ENCODE measurements at regions of chr5 and their contacts with region 1.

Region 1: DNA sequence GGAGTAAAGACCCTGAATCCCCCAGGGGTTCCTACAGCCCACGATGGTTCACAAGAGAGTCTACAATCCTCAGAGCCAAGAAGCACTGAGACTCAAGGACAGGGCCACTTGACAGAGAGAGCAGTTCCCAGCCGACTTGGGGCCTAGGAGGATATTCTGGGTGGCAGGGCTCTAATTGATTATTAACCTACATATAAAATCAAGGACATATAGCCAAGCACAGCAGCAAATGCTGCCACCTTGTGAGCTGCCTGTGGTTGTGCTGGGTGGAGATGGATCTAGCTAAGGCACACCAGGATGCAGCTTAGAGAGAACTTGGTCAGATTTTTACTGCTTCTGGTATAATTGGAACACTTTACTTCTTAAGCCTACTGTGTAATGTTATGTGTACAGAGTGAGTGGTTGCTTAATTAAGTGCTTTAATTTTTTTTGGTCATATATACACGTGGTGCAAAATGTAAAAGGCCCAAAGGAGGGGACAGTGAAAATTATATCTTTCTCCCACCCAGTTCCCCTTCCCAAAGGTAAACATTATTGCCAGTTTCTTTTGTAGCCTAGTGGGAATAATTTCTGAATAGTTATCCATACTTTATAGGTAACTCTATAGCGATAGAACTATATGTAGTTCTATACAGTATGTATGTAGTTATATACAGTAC is 78.8 kb downstream of the F2RL2 start:
- DNase-seq: peak; percentile 73
- H3K4me3 Mint-ChIP-seq: peak overlapping the region; percentile 64
- H3K27ac Mint-ChIP-seq: peak overlapping the region; percentile 96
- H3K4me1 Mint-ChIP-seq: peaks cover 91% of the 10 kb centered on the region
- H3K27me3 Mint-ChIP-seq: no peaks in the 10 kb centered on the region

Region 2: DNA sequence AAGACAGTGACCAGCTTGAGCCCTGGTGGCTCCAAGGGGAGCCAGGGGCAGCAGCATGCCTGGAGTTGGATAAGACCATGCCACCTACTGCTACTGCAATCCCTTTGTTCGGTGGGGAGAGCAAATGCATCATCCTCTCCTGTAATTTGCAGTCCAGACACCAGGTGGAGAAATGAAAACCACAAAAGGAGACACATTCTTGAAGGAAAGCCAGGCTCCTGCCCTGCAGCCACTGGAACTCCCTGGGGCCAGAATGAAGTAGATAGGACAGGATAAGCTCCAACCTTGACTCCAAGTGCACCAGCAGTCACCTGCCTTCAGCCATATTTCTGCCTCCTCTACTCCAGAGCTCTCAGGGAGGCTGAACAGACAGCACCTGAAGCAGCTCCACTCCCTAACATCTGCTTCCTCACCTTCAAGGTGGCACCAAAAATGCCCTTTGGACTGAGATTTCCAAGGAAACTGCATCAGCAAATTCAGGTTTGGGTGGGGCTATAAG is 206.4 kb before region 1 on chr5:
- CTCF ChIA-PET with region 1: interaction called, 14 read pairs
- DNase-seq: peak; percentile 62
- H3K4me3 Mint-ChIP-seq: no peak overlapping the region
- H3K27ac Mint-ChIP-seq: no peak overlapping the region
- H3K4me1 Mint-ChIP-seq: peaks cover 38% of the 10 kb centered on the region
- H3K27me3 Mint-ChIP-seq: peaks cover 3% of the 10 kb centered on the region

Region 3: GRCh38 chr5:76402886-76403765 is 141.3 kb before region 1 on chr5 and contains the start of gene IQGAP2:
- CTCF ChIA-PET with region 1: interaction called, 106 read pairs
- DNase-seq: peak; percentile 90
- H3K4me3 Mint-ChIP-seq: peak within 1 kb of the TSS; percentile 88
- H3K27ac Mint-ChIP-seq: peak within 1 kb of the TSS; percentile 100
- H3K4me1 Mint-ChIP-seq: peaks cover 59% of the 10 kb centered on the region
- H3K27me3 Mint-ChIP-seq: peaks cover 13% of the 10 kb centered on the region

Region 4: GRCh38 chr5:76425928-76426804 is 118.2 kb before region 1 on chr5:
- CTCF ChIA-PET with region 1: no interaction called
- DNase-seq: no peak
- H3K4me3 Mint-ChIP-seq: no peak overlapping the region
- H3K27ac Mint-ChIP-seq: no peak overlapping the region
- H3K4me1 Mint-ChIP-seq: peaks cover 19% of the 10 kb centered on the region
- H3K27me3 Mint-ChIP-seq: no peaks in the 10 kb centered on the region

Region 5: DNA sequence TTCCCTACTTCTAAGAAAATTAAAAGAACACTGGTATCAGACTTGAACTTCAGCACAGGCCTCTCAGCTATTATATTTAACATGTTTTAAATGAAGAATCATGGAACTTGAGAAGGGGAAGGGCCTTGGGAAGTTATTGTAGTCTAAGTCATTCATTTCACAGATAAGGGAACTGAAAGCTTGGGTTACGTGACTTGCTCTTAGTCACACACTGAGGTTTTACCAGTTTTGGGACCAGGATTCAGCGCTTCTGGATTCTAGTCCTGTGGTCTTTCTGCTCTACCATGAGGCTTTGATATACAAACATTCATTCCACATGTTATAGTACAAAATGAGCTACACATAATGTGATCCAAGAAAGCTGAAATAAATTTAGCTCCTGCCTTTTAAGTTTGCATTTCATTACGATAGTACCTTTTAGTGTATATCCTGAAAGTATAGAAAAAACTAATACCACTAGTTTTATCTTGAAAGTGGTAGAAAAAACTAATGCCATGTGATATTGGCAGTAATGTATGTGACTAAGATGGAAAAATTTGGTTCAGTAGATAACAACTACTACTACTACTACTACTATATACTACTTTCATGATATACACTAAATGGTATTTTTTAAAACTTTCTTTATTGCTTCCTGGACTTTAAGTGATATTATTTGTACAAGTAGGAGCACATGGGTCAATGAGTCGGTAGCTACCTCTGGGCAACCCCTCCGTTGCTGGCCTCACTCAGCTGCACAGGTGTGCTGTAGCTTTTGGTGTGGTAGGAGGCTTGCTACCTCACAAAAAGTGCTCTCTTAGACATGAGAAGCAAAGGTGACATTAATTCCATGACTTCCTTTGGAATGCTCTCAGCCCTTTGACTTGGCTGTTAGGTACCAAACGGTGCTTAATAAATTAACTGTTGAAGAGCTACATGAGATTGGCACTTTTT is 38.1 kb after region 1 on chr5:
- CTCF ChIA-PET with region 1: interaction called, 35 read pairs
- DNase-seq: no peak
- H3K4me3 Mint-ChIP-seq: no peak overlapping the region
- H3K27ac Mint-ChIP-seq: peak overlapping the region; percentile 7
- H3K4me1 Mint-ChIP-seq: peaks cover 14% of the 10 kb centered on the region
- H3K27me3 Mint-ChIP-seq: no peaks in the 10 kb centered on the region